Activated T-helper 1 cell treated with anti-CD3 and anti-CD28 coated beads, Interleukin-12 subunit alpha, Interleukin-12 subunit beta, Interleukin-2, Interleukin-4 antibody, amounts not matched to agents 30 ng/mL and 10 ng/mL and 1 ng/mL, durations not matched to agents 14 hours and 24 hours and 36 hours (primary cell): ENCODE measurements at regions of chr3 and their contacts with region 1.

Region 1: GRCh38 chr3:13895155-13896105 is 15.6 kb upstream of the WNT7A start:
- DNase-seq: peak; percentile 95
- H3K4me3 Mint-ChIP-seq: peak overlapping the region; percentile 89
- H3K27ac Mint-ChIP-seq: peak overlapping the region; percentile 79
- H3K4me1 Mint-ChIP-seq: peaks cover 22% of the 10 kb centered on the region
- H3K27me3 Mint-ChIP-seq: peaks cover 3% of the 10 kb centered on the region

Region 2: DNA sequence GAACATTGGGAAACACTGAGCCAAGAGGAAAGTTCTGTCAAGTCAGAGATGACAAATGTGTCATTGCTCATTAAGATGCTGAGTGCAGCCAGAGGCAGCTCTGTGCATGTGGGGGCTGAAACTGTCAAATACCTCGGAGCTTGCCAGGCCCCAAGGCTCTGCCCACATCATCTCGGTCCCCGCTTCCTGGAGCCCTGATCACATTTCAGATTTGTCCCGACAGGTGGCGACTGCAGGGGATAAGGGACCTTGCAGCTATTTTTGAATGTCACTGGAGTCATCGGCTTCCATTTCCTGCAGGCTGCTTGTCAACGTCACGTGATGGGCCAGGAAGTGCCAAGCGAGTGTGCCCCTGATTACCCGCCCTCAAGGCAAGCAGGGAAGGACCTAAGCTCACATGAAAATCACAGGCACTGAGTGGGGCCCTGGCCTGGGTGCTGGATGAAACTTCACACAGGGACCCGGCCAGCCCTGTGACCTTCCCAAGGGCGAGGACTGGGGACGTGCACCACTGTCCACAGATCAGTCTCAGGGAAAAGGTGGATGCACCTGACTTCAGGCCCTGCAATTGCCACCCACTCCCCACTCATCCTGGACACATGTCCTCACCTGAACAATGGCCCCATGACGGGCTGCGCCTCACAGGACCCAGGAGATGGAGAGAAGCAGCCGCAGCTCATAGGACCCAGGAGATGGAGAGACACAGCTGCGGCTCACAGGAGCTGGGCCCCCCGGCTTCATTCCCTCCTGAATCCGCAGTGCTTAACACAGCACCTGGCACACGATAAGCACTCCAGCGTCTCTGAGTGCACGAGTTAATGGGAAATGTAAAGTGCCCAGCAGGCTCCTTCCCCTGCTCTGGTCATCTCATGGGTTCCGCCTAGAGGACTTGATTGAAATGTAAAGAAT is 548.7 kb before region 1 on chr3:
- intact Hi-C with region 1: loop called (anchors 10 kb)
- DNase-seq: peak; percentile 59
- H3K4me3 Mint-ChIP-seq: no peak overlapping the region
- H3K27ac Mint-ChIP-seq: peak overlapping the region; percentile 74
- H3K4me1 Mint-ChIP-seq: peaks cover 52% of the 10 kb centered on the region
- H3K27me3 Mint-ChIP-seq: no peaks in the 10 kb centered on the region

Region 3: GRCh38 chr3:14113965-14114635 is 218.7 kb after region 1 on chr3:
- intact Hi-C with region 1: loop called (anchors 2 kb)
- DNase-seq: no peak
- H3K4me3 Mint-ChIP-seq: no peak overlapping the region
- H3K27ac Mint-ChIP-seq: no peak overlapping the region
- H3K4me1 Mint-ChIP-seq: no peaks in the 10 kb centered on the region
- H3K27me3 Mint-ChIP-seq: no peaks in the 10 kb centered on the region

Region 4: GRCh38 chr3:14178247-14179113 is 283.1 kb after region 1 on chr3 and contains the starts of genes LSM3 and XPC:
- intact Hi-C with region 1: loop called (anchors 1 kb)
- DNase-seq: peak; percentile 98
- H3K4me3 Mint-ChIP-seq: peak within 1 kb of the TSS; percentile 94
- H3K27ac Mint-ChIP-seq: peak within 1 kb of the TSS; percentile 99
- H3K4me1 Mint-ChIP-seq: peaks cover 64% of the 10 kb centered on the region
- H3K27me3 Mint-ChIP-seq: no peaks in the 10 kb centered on the region
- total RNA-seq, gene LSM3: 15.6 and 15.8 TPM in 2 replicates
- total RNA-seq, gene XPC: 34.1 and 35.9 TPM in 2 replicates

Region 5: GRCh38 chr3:14431892-14432834 is 536.7 kb after region 1 on chr3:
- intact Hi-C with region 1: loop called (anchors 1 kb)
- DNase-seq: peak; percentile 92
- H3K4me3 Mint-ChIP-seq: peak overlapping the region; percentile 76
- H3K27ac Mint-ChIP-seq: peak overlapping the region; percentile 97
- H3K4me1 Mint-ChIP-seq: peaks cover 85% of the 10 kb centered on the region
- H3K27me3 Mint-ChIP-seq: no peaks in the 10 kb centered on the region

Region 6: DNA sequence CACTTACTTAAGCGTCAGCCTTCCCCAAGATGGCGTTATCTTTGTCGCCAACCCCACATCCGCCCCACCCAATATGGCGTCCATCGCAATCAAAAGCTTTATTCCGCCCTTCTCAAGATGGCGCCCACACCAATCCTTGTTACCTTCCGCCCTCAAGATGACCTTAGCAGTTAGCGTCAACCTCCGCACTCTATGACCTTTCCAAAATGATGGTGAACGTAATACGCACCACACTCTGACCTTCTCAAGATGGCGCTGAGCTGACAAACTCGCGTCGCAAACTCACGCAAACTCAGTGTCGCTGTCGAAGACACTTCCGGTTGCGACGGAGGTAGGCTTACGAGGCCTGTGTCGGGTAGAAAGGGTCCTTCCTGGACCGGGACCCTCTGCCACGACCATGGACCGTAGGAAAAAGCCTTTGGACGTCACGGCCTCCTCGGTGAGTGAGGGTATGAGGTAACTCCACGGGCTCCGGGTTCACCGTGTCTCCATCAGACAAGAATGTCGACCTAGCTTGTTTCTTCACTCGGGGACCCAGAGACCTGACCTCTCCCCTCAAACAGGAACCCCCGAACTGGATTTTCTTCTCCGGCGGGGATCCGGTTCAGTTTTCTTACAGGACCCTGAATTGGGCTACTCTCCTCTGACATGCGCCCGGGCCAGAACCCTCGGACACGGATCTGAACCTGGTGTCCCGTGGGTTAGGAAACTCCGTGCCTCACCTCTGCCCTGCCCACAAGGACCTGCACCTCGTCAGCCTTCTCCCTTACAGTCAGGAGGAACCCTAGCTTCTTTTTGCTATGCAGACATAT is 756.2 kb after region 1 on chr3 and contains the start of gene CCDC174:
- intact Hi-C with region 1: loop called (anchors 5 kb)
- DNase-seq: peak; percentile 94
- H3K4me3 Mint-ChIP-seq: peak within 1 kb of the TSS; percentile 99
- H3K27ac Mint-ChIP-seq: peak within 1 kb of the TSS; percentile 90
- H3K4me1 Mint-ChIP-seq: peaks cover 38% of the 10 kb centered on the region
- H3K27me3 Mint-ChIP-seq: peaks cover 4% of the 10 kb centered on the region
- total RNA-seq, gene CCDC174: 16.6 and 21.7 TPM in 2 replicates